Posterior vena cava (tissue), 2 donors: ENCODE measurements at regions of chr14 and their contacts with region 1.

Region 1: GRCh38 chr14:35285168-35286002 is 6.8 kb upstream of the PSMA6 start:
- DNase-seq: no peak

Region 2: GRCh38 chr14:33484264-33484663 is 1801.1 kb before region 1 on chr14:
- intact Hi-C with region 1: loop called in 1 of 2 experiments (anchors 10 kb)
- DNase-seq: no peak

Region 3: DNA sequence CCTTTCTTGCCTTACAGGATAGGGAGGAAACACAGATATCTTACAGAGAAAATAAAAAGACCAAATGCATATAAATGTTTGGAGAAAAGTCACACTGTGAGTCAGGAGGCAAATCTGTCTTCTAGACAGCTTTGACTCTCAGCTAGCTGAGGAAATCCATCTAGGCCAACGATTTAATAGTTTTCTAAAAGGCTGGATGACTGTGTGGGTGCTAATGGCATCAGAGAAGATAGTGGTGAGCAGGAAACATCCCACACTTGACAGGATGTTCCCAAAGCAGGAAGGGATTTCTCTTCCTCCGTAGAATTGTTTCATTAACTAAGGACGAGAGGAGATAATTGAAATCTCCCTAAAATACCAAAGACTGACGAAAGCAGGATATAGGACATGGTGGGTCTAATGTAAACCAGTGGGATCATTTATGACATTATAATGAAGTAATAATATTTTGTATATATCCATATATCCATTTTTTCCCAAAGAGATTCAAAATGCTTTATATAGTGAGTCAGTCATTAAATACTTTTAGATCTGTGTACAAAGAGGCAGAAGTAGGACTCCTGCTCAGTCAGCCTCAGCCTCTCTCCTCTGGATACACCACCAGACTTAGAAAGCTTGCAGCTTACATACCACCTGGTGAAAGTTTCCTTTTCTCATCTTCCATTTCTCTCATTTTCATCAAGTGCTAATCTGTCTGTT is 37.5 kb before region 1 on chr14:
- intact Hi-C with region 1: no loop called
- DNase-seq: no peak